CD4-positive, alpha-beta memory T cell (primary cell): ENCODE measurements at regions of chr6 and their contacts with region 1.

Region 1: GRCh38 chr6:170516783-170517616 is 36.1 kb downstream of the PSMB1 start:
- DNase-seq: peak; percentile 40 to 53 (median 48)
- H3K4me3 ChIP-seq: no peak overlapping the region
- H3K4me3 Mint-ChIP-seq: peak overlapping the region in 6 of 8 donors; percentile 46 to 77 (median 70)
- H3K27ac ChIP-seq: no peak overlapping the region
- H3K27ac Mint-ChIP-seq: no peak overlapping the region
- H3K4me1 ChIP-seq: peaks cover 3% of the 10 kb centered on the region
- H3K4me1 Mint-ChIP-seq: peaks cover 0 to 2% (median 0%) of the 10 kb centered on the region in 4 donors
- H3K27me3 ChIP-seq: peaks cover 3% of the 10 kb centered on the region
- H3K27me3 Mint-ChIP-seq: peaks cover 12 to 23% of the 10 kb centered on the region in 2 donors

Region 2: DNA sequence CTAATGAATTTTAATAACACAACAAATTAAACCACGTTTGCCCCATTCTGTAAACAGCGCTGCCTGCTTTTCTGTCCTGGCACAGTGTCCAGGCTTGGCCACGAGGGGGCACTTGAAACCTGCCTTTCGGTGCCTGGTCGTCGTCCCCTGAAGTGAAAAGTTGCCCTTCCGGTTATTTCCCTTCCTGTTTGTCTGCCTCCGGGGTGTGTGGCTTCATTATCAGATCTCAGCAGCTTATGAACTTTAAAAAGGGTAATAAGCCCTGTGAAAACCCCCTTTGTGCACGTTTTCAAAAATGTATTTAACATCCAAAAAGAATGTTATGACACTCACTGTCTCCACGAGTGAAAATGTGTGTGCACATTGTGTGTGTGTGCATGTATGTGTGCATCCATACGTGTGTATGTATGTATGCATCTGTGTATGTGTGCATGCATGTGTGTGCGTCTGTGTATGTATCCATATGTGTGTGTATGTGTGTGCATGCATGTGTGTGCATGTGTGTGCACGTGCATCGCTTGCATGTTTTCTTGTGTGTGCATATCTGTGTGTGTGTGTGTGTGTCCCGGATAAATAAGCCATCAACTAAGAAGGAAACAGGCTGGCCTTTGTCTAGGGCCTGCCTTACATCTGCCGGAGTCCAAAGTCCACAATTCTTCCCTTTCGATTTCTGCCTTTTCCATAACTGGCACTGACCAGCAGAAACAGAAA is 1621.7 kb before region 1 on chr6:
- CTCF ChIA-PET with region 1: interaction called, 8 read pairs
- POLR2A ChIA-PET with region 1: no interaction called
- intact Hi-C with region 1: loop called (anchors 1 kb)
- DNase-seq: peak; percentile 71 to 78 (median 74)
- H3K4me3 ChIP-seq: no peak overlapping the region
- H3K4me3 Mint-ChIP-seq: peak overlapping the region; percentile 40 to 87 (median 60)
- H3K27ac ChIP-seq: no peak overlapping the region
- H3K27ac Mint-ChIP-seq: peak overlapping the region in 5 of 7 donors; percentile 8 to 77 (median 53)
- H3K4me1 ChIP-seq: peaks cover 8% of the 10 kb centered on the region
- H3K4me1 Mint-ChIP-seq: peaks cover 9 to 28% (median 11%) of the 10 kb centered on the region in 4 donors
- H3K27me3 ChIP-seq: no peaks in the 10 kb centered on the region
- H3K27me3 Mint-ChIP-seq: peaks cover 3% of the 10 kb centered on the region in 2 donors

Region 3: GRCh38 chr6:169789982-169790927 is 726.7 kb before region 1 on chr6:
- CTCF ChIA-PET with region 1: interaction called, 47 read pairs
- POLR2A ChIA-PET with region 1: no interaction called
- intact Hi-C with region 1: loop called (anchors 1 kb)
- DNase-seq: peak; percentile 60 to 73 (median 69)
- H3K4me3 ChIP-seq: peak overlapping the region; percentile 71 to 82
- H3K4me3 Mint-ChIP-seq: peak overlapping the region; percentile 88 to 93 (median 90)
- H3K27ac ChIP-seq: peak overlapping the region; percentile 4
- H3K27ac Mint-ChIP-seq: peak overlapping the region in 5 of 7 donors; percentile 53 to 88 (median 81)
- H3K4me1 ChIP-seq: peaks cover 16% of the 10 kb centered on the region
- H3K4me1 Mint-ChIP-seq: peaks cover 6 to 24% (median 13%) of the 10 kb centered on the region in 4 donors
- H3K27me3 ChIP-seq: no peaks in the 10 kb centered on the region
- H3K27me3 Mint-ChIP-seq: peaks cover 0 to 3% of the 10 kb centered on the region in 2 donors

Region 4: GRCh38 chr6:169950558-169950957 is 566.4 kb before region 1 on chr6:
- CTCF ChIA-PET with region 1: interaction called, 23 read pairs
- POLR2A ChIA-PET with region 1: no interaction called
- intact Hi-C with region 1: loop called (anchors 1 kb)
- DNase-seq: peak in 2 of 5 donors; percentile 15 to 22
- H3K4me3 ChIP-seq: no peak overlapping the region
- H3K4me3 Mint-ChIP-seq: no peak overlapping the region
- H3K27ac ChIP-seq: no peak overlapping the region
- H3K27ac Mint-ChIP-seq: no peak overlapping the region
- H3K4me1 ChIP-seq: no peaks in the 10 kb centered on the region
- H3K4me1 Mint-ChIP-seq: no peaks in the 10 kb centered on the region
- H3K27me3 ChIP-seq: no peaks in the 10 kb centered on the region
- H3K27me3 Mint-ChIP-seq: peaks cover 0 to under 1% of the 10 kb centered on the region in 2 donors

Region 5: DNA sequence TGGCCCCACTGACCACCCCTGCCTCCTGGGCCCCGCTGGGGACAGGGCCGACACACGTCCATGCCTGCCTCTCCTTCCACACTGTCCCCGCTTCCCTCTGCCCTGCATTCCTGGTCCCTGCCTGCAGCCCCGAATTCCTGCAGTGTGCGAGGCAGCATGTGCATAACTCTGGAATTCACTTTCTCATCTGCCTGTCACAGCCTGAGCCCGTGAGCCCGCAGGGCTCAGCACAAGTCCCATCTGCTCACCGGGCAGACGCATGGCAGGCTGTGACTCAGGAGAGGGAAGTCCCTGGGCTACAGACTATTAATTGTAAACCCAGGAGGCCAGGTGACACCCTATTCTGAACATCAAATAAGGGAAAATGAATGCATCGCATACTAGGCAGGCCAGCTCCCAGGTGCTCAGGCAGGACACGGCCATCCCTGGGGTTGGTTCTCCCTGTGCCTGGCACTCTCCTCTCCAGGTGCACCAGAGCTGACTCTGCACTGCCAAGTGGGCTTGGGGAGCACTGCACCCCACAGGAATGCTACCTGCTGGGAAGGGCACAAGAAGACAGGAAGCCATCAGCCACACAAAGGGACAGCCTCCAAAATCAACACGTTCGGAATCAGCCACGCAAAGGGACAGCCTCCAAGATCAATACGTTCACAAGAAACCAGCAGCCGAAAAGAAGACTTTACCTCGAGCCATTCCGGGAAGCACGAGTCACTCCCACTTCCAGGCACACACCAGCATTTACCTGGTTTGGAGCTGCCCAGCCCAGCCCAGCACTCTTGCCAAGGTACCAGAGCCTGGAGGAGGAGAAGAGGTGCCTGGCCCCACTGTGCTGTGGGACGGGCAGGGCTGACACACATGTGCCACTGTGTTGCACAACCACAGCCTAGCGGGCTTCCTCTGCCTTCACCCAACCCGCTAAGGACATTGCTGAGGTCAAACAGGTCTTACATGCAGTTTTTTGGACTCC is 292.0 kb before region 1 on chr6:
- CTCF ChIA-PET with region 1: no interaction called
- POLR2A ChIA-PET with region 1: no interaction called
- intact Hi-C with region 1: no loop called
- DNase-seq: no peak
- H3K4me3 ChIP-seq: no peak overlapping the region
- H3K4me3 Mint-ChIP-seq: peak overlapping the region in 1 of 8 donors; percentile 26
- H3K27ac ChIP-seq: no peak overlapping the region
- H3K27ac Mint-ChIP-seq: no peak overlapping the region
- H3K4me1 ChIP-seq: peaks cover 10% of the 10 kb centered on the region
- H3K4me1 Mint-ChIP-seq: peaks cover 5 to 16% (median 13%) of the 10 kb centered on the region in 4 donors
- H3K27me3 ChIP-seq: no peaks in the 10 kb centered on the region
- H3K27me3 Mint-ChIP-seq: peaks cover 0 to 1% of the 10 kb centered on the region in 2 donors

Region 6: GRCh38 chr6:170529839-170530469 is 13.0 kb after region 1 on chr6:
- CTCF ChIA-PET with region 1: interaction called, 34 read pairs
- POLR2A ChIA-PET with region 1: no interaction called
- intact Hi-C with region 1: no loop called
- DNase-seq: peak in 4 of 5 donors; percentile 41 to 53 (median 48)
- H3K4me3 ChIP-seq: no peak overlapping the region
- H3K4me3 Mint-ChIP-seq: no peak overlapping the region
- H3K27ac ChIP-seq: no peak overlapping the region
- H3K27ac Mint-ChIP-seq: peak overlapping the region in 2 of 7 donors; percentile 35 to 48
- H3K4me1 ChIP-seq: no peaks in the 10 kb centered on the region
- H3K4me1 Mint-ChIP-seq: peaks cover 0 to 2% (median under 1%) of the 10 kb centered on the region in 4 donors
- H3K27me3 ChIP-seq: no peaks in the 10 kb centered on the region
- H3K27me3 Mint-ChIP-seq: no peaks in the 10 kb centered on the region